Activated naive CD4-positive, alpha-beta T cell treated with anti-CD3 and anti-CD28 coated beads, Interleukin-2, amount 10 ng/mL, durations not matched to agents 7 days and 5 days (primary cell): ENCODE measurements at regions of chr5 and their contacts with region 1.

Region 1: DNA sequence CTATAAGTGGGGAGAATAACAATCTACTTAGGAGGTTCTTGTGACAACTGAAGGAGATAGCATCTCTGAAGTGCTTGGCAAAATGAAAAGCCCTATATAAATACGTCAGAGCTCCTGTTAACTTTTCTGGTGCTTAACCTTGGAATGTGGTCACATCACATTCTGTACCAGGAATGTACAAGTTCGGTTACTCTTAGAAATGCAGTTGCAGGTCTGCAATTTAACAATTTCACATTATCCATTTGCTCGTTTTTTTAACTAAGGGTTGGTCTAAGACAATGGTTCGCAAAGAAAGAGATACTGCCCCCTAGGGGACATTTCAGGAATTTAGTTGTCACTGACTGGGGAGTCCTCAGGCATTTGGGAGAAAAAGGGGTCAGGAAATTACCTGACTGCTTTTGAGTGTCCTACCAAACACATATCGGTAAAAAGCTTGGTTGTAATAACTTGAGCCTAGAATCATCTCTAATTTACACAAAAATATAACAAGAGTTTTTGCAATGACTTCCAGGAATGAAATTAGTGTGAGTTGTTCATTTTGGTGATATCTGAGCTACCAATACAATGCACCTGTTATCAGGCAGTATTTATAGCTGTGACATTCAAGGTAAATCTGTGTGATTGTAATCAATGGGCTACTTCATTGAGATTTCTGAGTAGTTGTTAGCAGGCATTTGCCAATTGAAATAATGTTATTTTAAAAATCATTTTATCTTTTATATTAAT is 5.4 kb upstream of the HBEGF start:
- DNase-seq: peak; percentile 69
- H3K4me3 Mint-ChIP-seq: no peak overlapping the region
- H3K27ac Mint-ChIP-seq: peak overlapping the region; percentile 80
- H3K4me1 Mint-ChIP-seq: peaks cover 44% of the 10 kb centered on the region
- H3K27me3 Mint-ChIP-seq: peaks cover 26% of the 10 kb centered on the region

Region 2: GRCh38 chr5:140042643-140043500 is 308.9 kb before region 1 on chr5 and contains the start of gene NRG2:
- CTCF ChIA-PET with region 1: no interaction called
- DNase-seq: peak; percentile 65
- H3K4me3 Mint-ChIP-seq: peak within 1 kb of the TSS; percentile 55
- H3K27ac Mint-ChIP-seq: no peak within 1 kb of the TSS
- H3K4me1 Mint-ChIP-seq: peaks cover 21% of the 10 kb centered on the region
- H3K27me3 Mint-ChIP-seq: peaks cover 77% of the 10 kb centered on the region

Region 3: GRCh38 chr5:140312067-140312790 is 39.5 kb before region 1 on chr5:
- CTCF ChIA-PET with region 1: interaction called, 12 read pairs
- DNase-seq: no peak
- H3K4me3 Mint-ChIP-seq: no peak overlapping the region
- H3K27ac Mint-ChIP-seq: no peak overlapping the region
- H3K4me1 Mint-ChIP-seq: peaks cover 13% of the 10 kb centered on the region
- H3K27me3 Mint-ChIP-seq: peaks cover 21% of the 10 kb centered on the region

Region 4: GRCh38 chr5:140336388-140336787 is 15.4 kb before region 1 on chr5:
- CTCF ChIA-PET with region 1: interaction called, 25 read pairs
- DNase-seq: no peak
- H3K4me3 Mint-ChIP-seq: no peak overlapping the region
- H3K27ac Mint-ChIP-seq: no peak overlapping the region
- H3K4me1 Mint-ChIP-seq: peaks cover 56% of the 10 kb centered on the region
- H3K27me3 Mint-ChIP-seq: no peaks in the 10 kb centered on the region

Region 5: GRCh38 chr5:140362860-140363630 is 11.3 kb after region 1 on chr5:
- CTCF ChIA-PET with region 1: interaction called, 14 read pairs
- DNase-seq: peak; percentile 88
- H3K4me3 Mint-ChIP-seq: peak overlapping the region; percentile 67
- H3K27ac Mint-ChIP-seq: no peak overlapping the region
- H3K4me1 Mint-ChIP-seq: peaks cover 5% of the 10 kb centered on the region
- H3K27me3 Mint-ChIP-seq: peaks cover 20% of the 10 kb centered on the region

Region 6: DNA sequence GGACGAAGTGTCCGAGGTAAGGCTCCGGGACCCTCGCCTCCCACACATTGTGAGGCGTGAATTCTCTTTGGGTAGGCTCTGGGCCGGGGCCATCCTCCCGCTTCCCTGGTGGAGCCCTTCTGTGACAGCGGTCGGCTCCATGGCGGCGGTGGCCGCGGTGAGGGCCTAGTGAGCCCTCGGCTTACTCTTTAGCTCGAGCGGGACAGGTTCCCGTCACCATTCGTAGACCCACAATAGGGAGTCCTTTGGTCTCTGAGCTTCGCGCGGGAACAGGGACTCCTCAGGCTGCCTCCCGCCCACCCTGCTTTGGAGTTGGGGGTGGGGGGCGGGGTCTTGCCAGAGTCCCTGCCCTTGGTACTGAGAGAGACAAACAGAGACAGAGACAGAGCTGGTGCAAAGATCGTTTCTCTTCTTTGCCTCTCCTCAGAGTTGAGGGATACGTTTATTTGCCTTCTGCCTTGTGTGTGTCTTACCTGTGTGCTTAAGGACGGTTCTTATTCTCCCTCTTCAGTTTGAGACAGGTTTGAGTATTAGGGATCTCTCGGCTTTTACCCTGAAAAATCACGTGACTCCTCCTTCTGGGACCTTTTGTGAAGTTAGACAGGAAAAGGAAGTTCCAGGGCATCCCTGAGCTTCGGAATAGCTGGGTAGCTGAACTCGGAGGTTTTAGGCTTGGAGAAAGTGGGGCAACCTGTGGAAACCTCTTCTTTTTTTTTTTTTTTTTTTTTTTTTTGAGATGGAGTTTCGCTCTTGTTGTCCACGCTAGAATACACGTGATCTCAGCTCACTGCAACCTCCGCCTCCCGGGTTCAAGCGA is 50.7 kb after region 1 on chr5:
- CTCF ChIA-PET with region 1: no interaction called
- DNase-seq: peak; percentile 70
- H3K4me3 Mint-ChIP-seq: no peak overlapping the region
- H3K27ac Mint-ChIP-seq: no peak overlapping the region
- H3K4me1 Mint-ChIP-seq: peaks cover 37% of the 10 kb centered on the region
- H3K27me3 Mint-ChIP-seq: no peaks in the 10 kb centered on the region